Activated CD4-positive, alpha-beta T cell treated with anti-CD3 and anti-CD28 coated beads for 36 hours (primary cell): ENCODE measurements at regions of chr19 and their contacts with region 1.

Region 1: GRCh38 chr19:57362997-57363705 is at the starts of genes TRAPPC2B and ZNF547:
- DNase-seq: peak; percentile 99
- ATAC-seq: peak; percentile 98
- H3K4me3 Mint-ChIP-seq: peak within 1 kb of the TSS; percentile 86
- H3K27ac Mint-ChIP-seq: peak within 1 kb of the TSS; percentile 94
- H3K4me1 Mint-ChIP-seq: peaks cover 13% of the 10 kb centered on the region
- H3K27me3 Mint-ChIP-seq: no peaks in the 10 kb centered on the region
- total RNA-seq, gene TRAPPC2B: 3.2 to 6.1 TPM
- total RNA-seq, gene ZNF547: 1.5 to 1.7 TPM

Region 2: GRCh38 chr19:57191141-57192076 is 171.7 kb before region 1 on chr19 and contains the start of gene ZNF264:
- CTCF ChIA-PET with region 1: no interaction called
- POLR2A ChIA-PET with region 1: no interaction called
- intact Hi-C with region 1: loop called in 1 of 2 experiments (anchors 1 kb)
- DNase-seq: peak; percentile 93
- ATAC-seq: peak; percentile 96
- H3K4me3 Mint-ChIP-seq: peak within 1 kb of the TSS; percentile 93
- H3K27ac Mint-ChIP-seq: peak within 1 kb of the TSS; percentile 95
- H3K4me1 Mint-ChIP-seq: peaks cover 28% of the 10 kb centered on the region
- H3K27me3 Mint-ChIP-seq: peaks cover 4% of the 10 kb centered on the region
- total RNA-seq, gene ZNF264: 14.8 to 21.1 TPM

Region 3: GRCh38 chr19:57320180-57321084 is 42.7 kb before region 1 on chr19 and contains the start of gene ZNF543:
- CTCF ChIA-PET with region 1: no interaction called
- POLR2A ChIA-PET with region 1: no interaction called
- intact Hi-C with region 1: loop called (anchors 1 kb)
- DNase-seq: peak; percentile 97
- ATAC-seq: peak; percentile 98
- H3K4me3 Mint-ChIP-seq: peak within 1 kb of the TSS; percentile 94
- H3K27ac Mint-ChIP-seq: peak within 1 kb of the TSS; percentile 93
- H3K4me1 Mint-ChIP-seq: peaks cover 24% of the 10 kb centered on the region
- H3K27me3 Mint-ChIP-seq: peaks cover 22% of the 10 kb centered on the region
- total RNA-seq, gene ZNF543: 5.8 to 6.2 TPM

Region 4: DNA sequence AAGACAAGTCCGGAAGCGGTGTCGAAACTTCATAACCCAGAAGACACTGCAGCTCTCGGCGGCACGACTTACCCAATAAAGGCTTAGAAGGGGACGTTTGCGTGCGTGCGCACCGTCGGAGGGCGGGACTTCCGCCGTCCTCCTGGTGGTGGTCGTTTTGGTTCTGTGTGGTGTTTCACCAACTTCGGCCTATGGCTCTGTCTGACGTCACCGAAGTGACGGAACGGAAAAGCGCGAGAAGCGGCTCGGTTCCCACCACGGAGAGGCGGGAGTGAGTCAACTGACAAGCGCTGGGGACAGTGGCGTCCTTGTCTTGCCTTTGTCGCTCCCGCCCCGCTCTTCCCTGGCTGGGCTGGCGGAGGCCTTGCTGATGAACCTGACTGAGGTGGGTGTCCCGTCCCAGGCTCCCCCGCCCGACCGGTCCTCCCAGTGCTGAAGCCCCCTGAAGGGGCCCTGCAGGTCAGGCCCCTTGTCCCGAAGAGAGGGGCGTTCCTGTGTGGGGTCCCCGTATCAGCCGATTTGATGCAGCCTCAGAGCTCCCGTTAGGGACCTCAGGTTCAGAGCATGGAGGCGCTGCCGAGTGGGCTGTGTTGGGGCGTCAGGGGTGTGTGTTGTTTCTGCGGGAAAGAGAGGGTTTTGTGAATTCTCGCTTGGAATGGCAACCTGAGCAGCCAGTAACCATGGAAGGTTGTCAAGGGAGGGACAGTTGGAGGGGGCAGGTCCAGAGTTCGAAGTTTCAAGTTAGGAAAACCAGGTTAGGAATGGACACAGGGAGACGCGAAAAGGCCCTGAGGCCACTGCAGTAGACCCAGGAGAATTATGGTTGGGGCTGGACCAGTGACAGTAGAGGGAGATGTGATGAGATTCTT is 26.8 kb after region 1 on chr19 and contains the start of gene ZNF548:
- CTCF ChIA-PET with region 1: no interaction called
- POLR2A ChIA-PET with region 1: interaction called, 3 read pairs
- intact Hi-C with region 1: loop called (anchors 1 kb)
- DNase-seq: peak; percentile 97
- ATAC-seq: peak; percentile 99
- H3K4me3 Mint-ChIP-seq: peak within 1 kb of the TSS; percentile 90
- H3K27ac Mint-ChIP-seq: peak within 1 kb of the TSS; percentile 94
- H3K4me1 Mint-ChIP-seq: peaks cover 26% of the 10 kb centered on the region
- H3K27me3 Mint-ChIP-seq: no peaks in the 10 kb centered on the region
- total RNA-seq, gene ZNF548: 15.1 to 20.3 TPM

Region 5: DNA sequence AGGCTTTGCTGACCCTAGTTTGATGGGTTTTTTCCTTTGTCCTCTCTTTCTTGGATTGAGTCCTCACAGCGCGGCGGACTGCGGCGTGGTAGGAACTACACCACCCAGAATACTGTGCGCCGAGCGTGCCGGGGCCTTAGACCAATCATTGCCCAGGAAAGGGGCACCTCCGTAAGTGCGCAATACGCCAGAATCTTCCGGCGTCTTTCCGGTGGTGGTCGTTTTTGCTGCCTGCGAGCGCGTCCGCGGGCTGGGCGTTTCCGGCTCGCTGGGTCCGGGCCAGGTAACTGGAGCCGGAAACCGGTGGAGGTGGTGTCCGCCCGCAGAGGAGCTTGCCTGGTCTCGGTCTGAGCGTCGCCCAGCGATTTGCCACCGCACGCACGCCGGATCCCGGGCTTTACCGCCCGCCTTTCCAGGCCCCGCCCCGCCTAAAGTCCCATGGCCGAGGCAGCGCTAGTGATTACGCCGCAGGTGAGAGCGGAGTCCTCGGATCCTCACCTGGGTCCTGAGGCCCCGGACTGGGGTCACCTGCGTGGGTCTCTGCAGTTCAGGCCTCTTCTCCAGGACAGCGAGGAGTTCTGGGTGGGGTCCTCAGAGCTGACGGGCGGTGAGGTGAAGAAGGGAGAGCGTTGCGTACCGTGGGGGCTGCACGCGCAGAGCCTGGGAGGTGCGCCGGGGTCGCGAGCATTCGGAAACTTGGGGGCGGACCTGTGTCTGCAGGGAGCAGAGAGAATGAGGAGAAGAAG is 164.2 kb after region 1 on chr19 and contains the start of gene ZNF549:
- CTCF ChIA-PET with region 1: no interaction called
- POLR2A ChIA-PET with region 1: no interaction called
- intact Hi-C with region 1: loop called in 1 of 2 experiments (anchors 1 kb)
- DNase-seq: peak; percentile 93
- ATAC-seq: peak; percentile 100
- H3K4me3 Mint-ChIP-seq: peak within 1 kb of the TSS; percentile 82
- H3K27ac Mint-ChIP-seq: peak within 1 kb of the TSS; percentile 84
- H3K4me1 Mint-ChIP-seq: peaks cover 18% of the 10 kb centered on the region
- H3K27me3 Mint-ChIP-seq: no peaks in the 10 kb centered on the region
- total RNA-seq, gene ZNF549: 3.7 to 4.6 TPM

Region 6: DNA sequence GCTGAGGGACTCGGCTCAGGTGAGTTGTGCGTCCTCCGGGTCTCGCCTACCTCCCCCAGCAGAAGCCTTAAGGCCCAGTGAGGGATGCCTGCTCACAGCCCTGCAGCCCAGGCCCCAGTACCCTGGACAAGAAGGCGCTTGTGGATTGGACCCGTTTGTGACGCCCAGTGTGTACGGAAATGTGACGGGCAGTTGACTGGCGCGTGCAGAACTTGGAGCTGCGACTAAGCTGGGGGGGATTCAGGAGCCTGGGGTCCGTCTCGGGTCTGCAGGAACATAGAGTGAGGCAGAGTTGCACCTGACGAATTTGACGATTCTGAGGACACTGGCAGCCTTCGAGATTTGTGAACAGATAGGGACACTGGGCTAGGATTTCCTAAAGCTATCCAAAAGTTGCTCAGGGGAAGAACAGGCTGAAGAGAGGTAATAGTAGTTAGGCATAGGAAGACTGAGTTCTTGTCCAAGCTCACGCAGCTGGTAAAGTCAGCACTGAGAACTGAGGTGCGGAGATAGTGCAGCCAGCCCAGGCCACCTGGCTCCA is 319.1 kb after region 1 on chr19:
- CTCF ChIA-PET with region 1: no interaction called
- POLR2A ChIA-PET with region 1: no interaction called
- intact Hi-C with region 1: loop called in 1 of 2 experiments (anchors 1 kb)
- DNase-seq: no peak
- ATAC-seq: no peak
- H3K4me3 Mint-ChIP-seq: peak overlapping the region; percentile 85
- H3K27ac Mint-ChIP-seq: peak overlapping the region; percentile 93
- H3K4me1 Mint-ChIP-seq: peaks cover 31% of the 10 kb centered on the region
- H3K27me3 Mint-ChIP-seq: peaks cover under 1% of the 10 kb centered on the region

Region 7: DNA sequence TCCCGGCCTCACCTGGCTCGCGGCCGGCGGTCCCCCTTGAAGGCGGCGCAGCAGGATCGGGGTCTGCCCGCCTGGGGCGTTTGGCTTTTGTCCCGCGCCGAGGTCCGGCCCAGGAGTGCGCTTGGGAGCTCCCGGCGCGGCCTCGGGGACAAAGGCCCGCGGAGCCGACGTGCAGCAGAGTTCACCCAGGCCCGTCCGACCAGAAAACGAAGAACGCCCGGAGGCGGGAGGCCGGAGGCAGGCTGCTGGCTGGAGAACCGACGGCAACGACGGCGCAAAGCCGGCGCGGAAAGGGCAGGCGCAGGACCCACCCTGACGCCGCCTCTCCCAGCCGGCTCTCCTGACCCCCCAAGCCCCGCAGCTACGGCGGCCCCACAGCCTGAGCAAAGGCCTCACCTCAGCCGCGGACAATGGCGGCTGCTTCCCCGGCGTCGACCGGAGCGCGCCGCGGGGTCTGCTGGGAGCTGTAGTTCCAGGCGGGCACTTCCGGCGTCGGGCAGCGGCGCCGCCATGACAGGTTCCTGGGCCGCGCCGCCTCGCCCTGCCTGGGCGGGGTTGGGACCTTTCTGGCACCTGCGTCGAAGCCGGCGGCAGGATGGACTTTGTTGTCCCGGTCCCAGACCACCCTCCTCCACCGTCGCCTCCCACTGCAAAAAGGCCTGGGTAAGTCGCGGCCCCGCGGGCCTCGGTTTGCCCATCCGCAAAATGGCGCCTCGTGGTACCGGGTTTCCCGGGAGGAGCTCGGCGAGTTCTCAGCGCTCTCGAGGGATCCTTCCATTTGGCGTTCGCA is 639.4 kb after region 1 on chr19 and contains the start of gene ZNF606:
- CTCF ChIA-PET with region 1: no interaction called
- POLR2A ChIA-PET with region 1: no interaction called
- intact Hi-C with region 1: loop called in 1 of 2 experiments (anchors 1 kb)
- DNase-seq: peak; percentile 93
- ATAC-seq: peak; percentile 99
- H3K4me3 Mint-ChIP-seq: peak within 1 kb of the TSS; percentile 80
- H3K27ac Mint-ChIP-seq: peak within 1 kb of the TSS; percentile 86
- H3K4me1 Mint-ChIP-seq: peaks cover 29% of the 10 kb centered on the region
- H3K27me3 Mint-ChIP-seq: no peaks in the 10 kb centered on the region
- total RNA-seq, gene ZNF606: 6.0 to 8.9 TPM